Breast epithelium (tissue), 4 donors: ENCODE measurements at regions of chr3 and their contacts with region 1.

Region 1: GRCh38 chr3:138740072-138740471 is 94.7 kb downstream of the PIK3CB start:
- DNase-seq: no peak
- H3K4me3 ChIP-seq: no peak overlapping the region
- H3K27ac ChIP-seq: no peak overlapping the region
- H3K4me1 ChIP-seq: no peaks in the 10 kb centered on the region
- H3K27me3 ChIP-seq: no peaks in the 10 kb centered on the region
- CTCF ChIP-seq: no peak
- POLR2A ChIP-seq: no peak

Region 2: GRCh38 chr3:138479438-138479863 is 260.6 kb before region 1 on chr3:
- intact Hi-C with region 1: loop called (anchors 5 kb)
- DNase-seq: no peak
- H3K4me3 ChIP-seq: no peak overlapping the region
- H3K27ac ChIP-seq: no peak overlapping the region
- H3K4me1 ChIP-seq: no peaks in the 10 kb centered on the region
- H3K27me3 ChIP-seq: no peaks in the 10 kb centered on the region
- CTCF ChIP-seq: peak in 1 of 3 donors; percentile 22
- POLR2A ChIP-seq: no peak